ENCODE measurements at regions of chr7 and their contacts with region 1.

Region 1: DNA sequence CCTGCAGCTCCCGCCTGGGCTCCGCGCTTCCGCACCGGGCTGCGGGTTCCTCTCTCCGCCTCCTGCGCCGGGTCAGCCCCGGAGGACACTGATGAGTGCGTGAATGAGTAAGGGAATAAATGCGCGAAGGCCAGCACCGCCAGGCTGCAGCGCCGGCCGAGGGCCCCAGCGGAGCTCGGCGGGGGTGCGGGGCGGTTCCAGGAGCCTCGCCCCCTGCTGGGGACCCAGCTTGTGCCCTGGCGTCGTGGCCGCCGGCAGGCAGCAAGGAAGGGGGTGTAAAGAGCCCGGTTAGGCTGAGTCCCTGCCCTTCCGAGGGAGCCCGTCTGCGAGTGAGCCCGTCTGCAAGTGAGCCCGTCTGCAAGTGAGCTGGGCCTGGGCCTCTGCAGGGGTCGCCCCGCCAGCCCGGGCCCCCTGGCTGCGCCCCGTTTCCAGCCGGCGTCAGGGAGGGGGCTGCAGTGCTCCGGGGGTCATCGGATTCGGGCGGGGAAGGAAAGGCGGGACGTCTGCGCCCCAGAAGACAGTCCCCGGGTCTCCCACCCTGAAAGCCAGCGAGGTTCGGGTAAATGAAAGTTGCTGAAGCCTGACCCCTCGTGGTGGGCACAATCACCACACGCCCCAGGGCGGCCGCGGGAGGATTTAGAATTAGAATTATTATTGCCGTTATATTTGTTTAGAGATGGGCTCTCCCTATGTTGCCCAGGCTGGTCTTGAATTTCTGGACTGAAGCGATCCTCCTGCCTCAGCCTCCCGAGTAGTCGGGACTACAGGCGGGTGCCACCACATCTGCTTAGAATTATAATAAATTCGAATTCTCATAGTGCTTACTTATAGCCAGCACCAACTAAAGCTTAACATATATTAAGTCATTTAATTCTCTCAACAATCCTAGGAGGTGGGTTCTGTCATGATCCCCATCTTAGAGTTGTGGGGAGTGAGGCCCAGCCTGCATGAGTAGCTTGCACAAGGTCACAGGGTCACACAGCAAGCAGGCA is 8.6 kb upstream of the CRYGN start:
- DNase-seq: peak; percentile 82
- H3K4me3 Mint-ChIP-seq: peak overlapping the region; percentile 65
- H3K27ac Mint-ChIP-seq: no peak overlapping the region
- H3K4me1 Mint-ChIP-seq: peaks cover 4% of the 10 kb centered on the region
- H3K27me3 Mint-ChIP-seq: peaks cover 2% of the 10 kb centered on the region

Region 2: DNA sequence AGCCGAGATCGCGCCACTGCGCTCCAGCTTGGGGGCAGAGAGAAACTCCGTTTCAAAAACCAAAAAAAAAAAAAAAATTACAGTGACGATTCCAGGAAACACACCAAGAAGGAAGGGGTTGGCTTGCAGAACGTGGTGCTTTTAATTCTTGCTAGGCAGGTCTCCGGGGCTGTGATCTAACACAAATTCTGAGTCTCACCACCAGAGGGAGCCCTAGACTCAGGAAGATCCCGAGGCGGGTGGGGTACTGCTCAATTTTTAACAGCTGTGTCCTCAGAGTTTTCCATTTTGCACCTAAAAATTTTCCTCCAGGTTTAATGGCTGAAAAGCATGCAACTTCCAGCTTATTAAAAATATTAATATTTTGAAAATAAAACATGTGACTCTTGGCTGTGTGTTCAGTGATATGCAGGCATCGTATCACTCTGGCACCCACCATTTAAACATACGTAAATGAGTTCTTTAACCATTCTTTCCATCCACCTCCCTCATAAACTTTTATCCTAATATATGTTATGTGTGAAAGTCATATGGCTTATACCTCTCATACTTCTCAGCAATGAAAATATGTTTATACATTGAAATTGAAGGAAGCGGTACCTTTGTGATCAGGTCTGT is 133.4 kb before region 1 on chr7:
- CTCF ChIA-PET with region 1: interaction called, 60 read pairs
- POLR2A ChIA-PET with region 1: no interaction called
- intact Hi-C with region 1: loop called (anchors 1 kb)
- DNase-seq: peak; percentile 82
- H3K4me3 Mint-ChIP-seq: no peak overlapping the region
- H3K27ac Mint-ChIP-seq: peak overlapping the region; percentile 53
- H3K4me1 Mint-ChIP-seq: peaks cover 10% of the 10 kb centered on the region
- H3K27me3 Mint-ChIP-seq: no peaks in the 10 kb centered on the region

Region 3: DNA sequence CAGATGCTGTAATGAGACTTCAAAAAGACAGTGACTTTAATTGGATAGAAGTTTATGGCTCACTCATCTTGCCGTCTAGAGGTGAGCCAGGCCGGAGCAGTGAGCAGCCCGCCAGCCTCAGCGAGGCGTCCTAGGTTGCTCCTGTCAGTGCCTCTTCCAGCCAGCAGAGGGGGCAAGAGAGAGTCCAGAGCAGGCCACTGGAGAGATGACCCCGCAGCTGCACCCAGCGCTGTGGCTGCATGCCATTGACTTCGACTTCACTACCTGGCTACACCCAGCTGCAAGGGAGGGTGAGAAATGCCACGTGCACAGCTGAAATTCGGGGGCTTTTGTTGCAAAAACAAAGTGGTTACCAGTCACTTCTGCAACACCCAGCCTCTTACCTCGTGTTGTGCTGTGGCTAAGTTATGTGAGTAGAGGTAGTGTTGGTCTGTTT is 80.4 kb before region 1 on chr7:
- CTCF ChIA-PET with region 1: interaction called, 384 read pairs
- POLR2A ChIA-PET with region 1: no interaction called
- intact Hi-C with region 1: loop called (anchors 1 kb)
- DNase-seq: peak; percentile 87
- H3K4me3 Mint-ChIP-seq: no peak overlapping the region
- H3K27ac Mint-ChIP-seq: no peak overlapping the region
- H3K4me1 Mint-ChIP-seq: peaks cover 5% of the 10 kb centered on the region
- H3K27me3 Mint-ChIP-seq: no peaks in the 10 kb centered on the region

Region 4: GRCh38 chr7:151382079-151382885 is 66.3 kb before region 1 on chr7:
- CTCF ChIA-PET with region 1: interaction called, 14 read pairs
- POLR2A ChIA-PET with region 1: no interaction called
- intact Hi-C with region 1: no loop called
- DNase-seq: peak; percentile 41
- H3K4me3 Mint-ChIP-seq: peak overlapping the region; percentile 45
- H3K27ac Mint-ChIP-seq: no peak overlapping the region
- H3K4me1 Mint-ChIP-seq: peaks cover 6% of the 10 kb centered on the region
- H3K27me3 Mint-ChIP-seq: peaks cover 9% of the 10 kb centered on the region

Region 5: DNA sequence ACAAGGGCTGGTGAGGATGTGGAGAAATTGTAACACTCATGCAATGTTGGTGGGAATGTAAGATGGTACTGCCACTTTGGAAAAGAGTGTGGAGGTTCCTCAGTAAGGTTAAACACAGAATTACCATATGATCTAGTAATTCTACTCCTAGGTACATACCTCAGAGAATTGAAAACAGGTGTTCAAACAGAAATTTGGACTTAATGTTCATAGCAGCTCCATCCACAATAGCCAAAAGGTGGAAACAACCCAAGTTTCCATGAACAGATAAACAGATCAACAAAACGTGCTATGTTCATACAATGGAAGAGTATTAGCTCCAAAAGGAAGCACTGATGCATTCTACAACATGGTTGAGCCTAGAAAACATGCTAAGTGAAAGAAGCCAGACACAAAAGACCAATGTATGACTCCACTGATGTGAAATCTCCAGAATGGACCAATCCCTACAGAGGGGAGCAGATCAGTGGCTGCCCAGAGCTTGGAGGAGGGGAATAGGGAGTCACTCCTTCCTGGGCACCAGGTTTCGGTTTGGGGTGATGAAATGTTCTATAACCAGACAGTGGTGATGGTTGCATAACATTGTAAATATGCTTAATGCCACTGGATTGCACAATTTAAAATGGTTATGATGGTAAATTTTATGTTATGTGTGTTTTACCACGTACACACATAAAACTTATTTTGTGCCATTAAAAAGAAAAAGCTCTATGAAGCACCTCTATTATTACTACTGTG is 33.0 kb before region 1 on chr7:
- CTCF ChIA-PET with region 1: interaction called, 6 read pairs
- POLR2A ChIA-PET with region 1: no interaction called
- intact Hi-C with region 1: loop called (anchors 2 kb)
- DNase-seq: no peak
- H3K4me3 Mint-ChIP-seq: no peak overlapping the region
- H3K27ac Mint-ChIP-seq: no peak overlapping the region
- H3K4me1 Mint-ChIP-seq: peaks cover 26% of the 10 kb centered on the region
- H3K27me3 Mint-ChIP-seq: peaks cover 16% of the 10 kb centered on the region

Region 6: GRCh38 chr7:151432791-151433521 is 15.6 kb before region 1 on chr7:
- CTCF ChIA-PET with region 1: interaction called, 43 read pairs
- POLR2A ChIA-PET with region 1: no interaction called
- intact Hi-C with region 1: no loop called
- DNase-seq: peak; percentile 84
- H3K4me3 Mint-ChIP-seq: peak overlapping the region; percentile 13
- H3K27ac Mint-ChIP-seq: peak overlapping the region; percentile 68
- H3K4me1 Mint-ChIP-seq: peaks cover 40% of the 10 kb centered on the region
- H3K27me3 Mint-ChIP-seq: no peaks in the 10 kb centered on the region

Region 7: GRCh38 chr7:151459726-151460473 is 11.3 kb after region 1 on chr7:
- CTCF ChIA-PET with region 1: interaction called, 36 read pairs
- POLR2A ChIA-PET with region 1: no interaction called
- intact Hi-C with region 1: no loop called
- DNase-seq: no peak
- H3K4me3 Mint-ChIP-seq: no peak overlapping the region
- H3K27ac Mint-ChIP-seq: no peak overlapping the region
- H3K4me1 Mint-ChIP-seq: peaks cover 8% of the 10 kb centered on the region
- H3K27me3 Mint-ChIP-seq: peaks cover 4% of the 10 kb centered on the region

Measured in activated CD4-positive, alpha-beta memory T cell treated with anti-CD3 and anti-CD28 coated beads for 36 hours (primary cell).